ENCODE measurements at regions of chr6 and their contacts with region 1.

Region 1: DNA sequence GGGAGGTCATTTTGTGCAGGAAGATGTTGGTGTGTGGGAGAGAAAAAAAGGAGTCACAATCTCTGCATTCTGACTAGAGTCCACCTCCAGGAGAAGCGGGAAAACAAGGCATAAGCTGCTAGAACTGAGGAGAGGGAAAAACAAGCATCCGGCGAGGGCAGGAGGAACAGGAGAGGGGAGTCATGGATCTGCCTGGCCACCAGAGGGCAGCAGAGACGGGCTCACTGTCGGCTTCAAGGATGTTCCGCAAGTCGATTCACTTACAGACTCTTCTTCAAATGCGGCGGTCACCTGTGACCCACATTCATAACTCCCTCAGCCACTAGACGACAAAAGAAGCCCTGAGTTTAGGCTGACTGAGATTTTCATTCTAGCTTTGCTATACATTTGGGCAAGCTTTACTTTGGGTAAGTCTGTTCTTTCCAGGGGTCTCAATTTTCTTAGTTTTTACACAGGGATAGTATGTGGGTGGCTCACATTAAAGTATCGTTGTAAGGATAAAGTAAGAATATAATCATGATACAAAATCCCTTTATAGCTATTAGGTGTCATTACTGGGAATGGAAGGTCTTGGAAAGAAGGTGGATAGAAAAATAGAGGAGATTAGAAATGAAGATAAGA is 6.6 kb upstream of the BTNL2 start:
- DNase-seq: peak; percentile 54 to 85 (median 79)
- ATAC-seq: peak; percentile 96
- H3K4me3 ChIP-seq: no peak overlapping the region
- H3K4me3 Mint-ChIP-seq: no peak overlapping the region
- H3K27ac ChIP-seq: no peak overlapping the region
- H3K27ac Mint-ChIP-seq: no peak overlapping the region
- H3K4me1 ChIP-seq: no peaks in the 10 kb centered on the region
- H3K4me1 Mint-ChIP-seq: peaks cover 3 to 14% (median 8%) of the 10 kb centered on the region in 7 donors
- H3K27me3 ChIP-seq: peaks cover 0 to 3% of the 10 kb centered on the region in 2 donors
- H3K27me3 Mint-ChIP-seq: peaks cover 30 to 62% (median 45%) of the 10 kb centered on the region in 5 donors

Region 2: GRCh38 chr6:32491700-32492099 is 78.2 kb after region 1 on chr6:
- CTCF ChIA-PET with region 1: no interaction called
- POLR2A ChIA-PET with region 1: no interaction called
- intact Hi-C with region 1: no loop called
- DNase-seq: no peak
- ATAC-seq: no peak
- H3K4me3 ChIP-seq: no peak overlapping the region
- H3K4me3 Mint-ChIP-seq: no peak overlapping the region
- H3K27ac ChIP-seq: no peak overlapping the region
- H3K27ac Mint-ChIP-seq: no peak overlapping the region
- H3K4me1 ChIP-seq: no peaks in the 10 kb centered on the region
- H3K4me1 Mint-ChIP-seq: no peaks in the 10 kb centered on the region
- H3K27me3 ChIP-seq: no peaks in the 10 kb centered on the region
- H3K27me3 Mint-ChIP-seq: peaks cover 0 to 29% (median 0%) of the 10 kb centered on the region in 5 donors

Region 3: DNA sequence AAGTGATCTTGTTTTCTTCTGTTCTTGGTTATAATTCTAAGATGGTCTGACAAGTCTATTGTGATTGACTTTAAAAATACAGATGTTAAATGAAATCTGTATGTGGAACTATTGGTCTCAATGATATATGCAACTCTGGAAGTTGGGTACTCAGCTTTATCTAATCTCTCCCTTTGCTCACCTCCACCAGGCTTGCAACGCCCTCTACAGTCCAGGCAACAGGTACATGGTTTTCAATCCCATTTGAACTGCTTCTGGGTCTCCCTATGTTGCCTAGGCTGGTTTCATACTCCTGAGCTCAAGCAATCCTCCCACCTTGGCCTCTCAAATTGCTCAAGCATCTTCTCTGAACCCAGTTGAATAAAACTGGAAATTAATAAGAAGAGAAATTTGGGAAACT is 278.5 kb after region 1 on chr6:
- CTCF ChIA-PET with region 1: interaction called, 5 read pairs
- POLR2A ChIA-PET with region 1: no interaction called
- intact Hi-C with region 1: loop called (anchors 1 kb)
- DNase-seq: peak in 8 of 9 donors; percentile 13 to 62 (median 46)
- ATAC-seq: peak; percentile 76
- H3K4me3 ChIP-seq: no peak overlapping the region
- H3K4me3 Mint-ChIP-seq: no peak overlapping the region
- H3K27ac ChIP-seq: no peak overlapping the region
- H3K27ac Mint-ChIP-seq: no peak overlapping the region
- H3K4me1 ChIP-seq: peaks cover 0 to 1% of the 10 kb centered on the region in 2 donors
- H3K4me1 Mint-ChIP-seq: peaks cover 4 to 16% (median 7%) of the 10 kb centered on the region in 7 donors
- H3K27me3 ChIP-seq: no peaks in the 10 kb centered on the region
- H3K27me3 Mint-ChIP-seq: peaks cover 3 to 58% (median 23%) of the 10 kb centered on the region in 5 donors

Region 4: GRCh38 chr6:32700391-32701040 is 287.0 kb after region 1 on chr6:
- CTCF ChIA-PET with region 1: interaction called, 54 read pairs
- POLR2A ChIA-PET with region 1: no interaction called
- intact Hi-C with region 1: loop called (anchors 1 kb)
- DNase-seq: peak in 6 of 9 donors; percentile 15 to 54 (median 38)
- ATAC-seq: peak; percentile 68
- H3K4me3 ChIP-seq: no peak overlapping the region
- H3K4me3 Mint-ChIP-seq: peak overlapping the region in 7 of 10 donors; percentile 25 to 61 (median 46)
- H3K27ac ChIP-seq: no peak overlapping the region
- H3K27ac Mint-ChIP-seq: no peak overlapping the region
- H3K4me1 ChIP-seq: no peaks in the 10 kb centered on the region
- H3K4me1 Mint-ChIP-seq: peaks cover 0 to 9% (median 5%) of the 10 kb centered on the region in 7 donors
- H3K27me3 ChIP-seq: no peaks in the 10 kb centered on the region
- H3K27me3 Mint-ChIP-seq: peaks cover 26 to 69% (median 43%) of the 10 kb centered on the region in 5 donors

Region 5: DNA sequence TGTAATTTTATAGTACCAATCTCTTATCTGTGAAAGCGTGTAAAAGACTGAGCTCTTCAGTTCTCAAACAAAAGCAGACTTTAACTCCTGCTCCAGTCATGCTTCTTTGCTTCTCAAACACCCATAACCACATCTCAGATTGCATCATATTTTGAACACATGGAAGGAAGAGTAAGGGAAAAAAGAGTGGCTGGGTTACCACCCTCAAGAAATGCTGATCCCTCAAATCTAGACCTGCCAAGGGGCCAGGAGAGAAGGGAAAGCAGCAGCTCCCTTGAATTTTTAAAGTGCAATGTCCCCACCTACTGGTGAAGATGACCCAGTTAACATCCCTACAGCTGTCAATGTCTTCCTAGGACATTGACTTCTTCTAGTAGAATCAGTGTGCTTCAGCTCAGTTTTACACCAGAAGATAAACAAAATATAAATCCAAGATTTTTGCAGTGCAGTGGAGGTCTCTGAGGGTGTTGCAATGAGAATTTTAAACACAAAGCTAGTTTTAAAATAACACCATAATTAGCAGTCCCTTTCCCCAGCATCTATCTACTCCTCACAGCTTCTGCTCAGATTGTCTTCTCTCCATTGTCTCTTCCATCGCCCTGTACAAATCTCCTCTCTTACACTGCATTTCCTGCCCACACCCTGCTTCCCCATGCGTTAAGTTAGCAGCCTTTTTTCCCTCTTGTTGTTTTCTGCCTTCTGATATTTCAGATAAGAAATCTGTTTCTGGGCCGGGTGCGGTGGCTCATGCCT is 372.4 kb after region 1 on chr6:
- CTCF ChIA-PET with region 1: interaction called, 39 read pairs
- POLR2A ChIA-PET with region 1: no interaction called
- intact Hi-C with region 1: loop called (anchors 1 kb)
- DNase-seq: peak in 6 of 9 donors; percentile 28 to 54 (median 36)
- ATAC-seq: peak; percentile 76
- H3K4me3 ChIP-seq: no peak overlapping the region
- H3K4me3 Mint-ChIP-seq: no peak overlapping the region
- H3K27ac ChIP-seq: no peak overlapping the region
- H3K27ac Mint-ChIP-seq: no peak overlapping the region
- H3K4me1 ChIP-seq: no peaks in the 10 kb centered on the region
- H3K4me1 Mint-ChIP-seq: peaks cover 0 to 2% (median 0%) of the 10 kb centered on the region in 7 donors
- H3K27me3 ChIP-seq: no peaks in the 10 kb centered on the region
- H3K27me3 Mint-ChIP-seq: peaks cover 13 to 68% (median 21%) of the 10 kb centered on the region in 5 donors

Region 6: GRCh38 chr6:32796848-32797776 is 383.6 kb after region 1 on chr6:
- CTCF ChIA-PET with region 1: interaction called, 23 read pairs
- POLR2A ChIA-PET with region 1: interaction called, 3 read pairs
- intact Hi-C with region 1: loop called (anchors 1 kb)
- DNase-seq: peak; percentile 38 to 79 (median 62)
- ATAC-seq: peak; percentile 80
- H3K4me3 ChIP-seq: no peak overlapping the region
- H3K4me3 Mint-ChIP-seq: peak overlapping the region in 9 of 10 donors; percentile 35 to 80 (median 68)
- H3K27ac ChIP-seq: no peak overlapping the region
- H3K27ac Mint-ChIP-seq: peak overlapping the region in 1 of 9 donors; percentile 23
- H3K4me1 ChIP-seq: peaks cover 5 to 16% of the 10 kb centered on the region in 2 donors
- H3K4me1 Mint-ChIP-seq: peaks cover 15 to 35% (median 27%) of the 10 kb centered on the region in 7 donors
- H3K27me3 ChIP-seq: peaks cover 0 to 5% of the 10 kb centered on the region in 2 donors
- H3K27me3 Mint-ChIP-seq: peaks cover 0 to 70% (median 29%) of the 10 kb centered on the region in 5 donors

Region 7: GRCh38 chr6:33161354-33162331 is 748.1 kb after region 1 on chr6:
- CTCF ChIA-PET with region 1: no interaction called
- POLR2A ChIA-PET with region 1: no interaction called
- intact Hi-C with region 1: no loop called
- DNase-seq: peak; percentile 64 to 89 (median 79)
- ATAC-seq: peak; percentile 97
- H3K4me3 ChIP-seq: peak overlapping the region; percentile 51
- H3K4me3 Mint-ChIP-seq: peak overlapping the region; percentile 76 to 90 (median 85)
- H3K27ac ChIP-seq: no peak overlapping the region
- H3K27ac Mint-ChIP-seq: peak overlapping the region in 6 of 9 donors; percentile 26 to 82 (median 58)
- H3K4me1 ChIP-seq: no peaks in the 10 kb centered on the region
- H3K4me1 Mint-ChIP-seq: peaks cover 8 to 16% (median 10%) of the 10 kb centered on the region in 7 donors
- H3K27me3 ChIP-seq: no peaks in the 10 kb centered on the region
- H3K27me3 Mint-ChIP-seq: peaks cover 0 to 5% (median 0%) of the 10 kb centered on the region in 5 donors